GM23248 (cell line): ENCODE measurements at regions of chr1 and their contacts with region 1.

Region 1: DNA sequence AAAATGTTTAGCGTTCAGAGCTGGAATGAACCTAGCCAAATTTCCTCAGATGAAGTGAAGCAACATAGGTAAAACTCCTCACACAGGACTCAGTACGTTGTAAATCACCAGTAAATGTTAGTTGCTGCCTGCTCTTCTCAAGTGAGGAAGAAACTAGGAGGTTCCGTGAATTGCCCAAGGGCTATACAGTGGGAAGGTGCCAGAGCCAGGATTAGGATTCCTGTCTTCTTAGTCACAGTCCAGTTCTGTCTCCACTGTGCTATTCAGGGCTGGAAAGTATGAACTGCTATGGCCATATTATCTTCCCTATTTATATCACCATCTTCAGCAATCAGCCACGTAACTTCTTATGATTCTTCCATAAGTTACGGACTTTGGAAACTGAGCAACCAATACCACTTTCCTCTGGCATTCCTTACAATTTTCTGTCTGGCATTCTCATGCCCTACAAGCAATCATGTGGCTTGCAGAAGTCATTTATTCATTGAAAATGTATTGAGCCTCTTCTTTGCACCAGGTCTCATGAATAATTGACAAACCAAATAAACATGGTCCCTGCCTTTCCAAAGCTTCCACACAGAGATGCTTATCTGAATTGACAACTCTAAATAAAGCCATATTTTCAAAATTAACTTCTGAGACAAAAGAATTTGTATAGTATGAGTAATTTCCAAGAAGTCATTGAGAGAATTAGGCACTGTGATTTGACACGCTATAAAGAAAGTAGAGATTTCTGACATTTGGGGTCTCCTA is 271.6 kb upstream of the SGIP1 start:
- DNase-seq: peak; percentile 93
- H3K4me3 ChIP-seq: peak overlapping the region; percentile 30
- H3K27ac ChIP-seq: peak overlapping the region; percentile 86
- H3K4me1 ChIP-seq: peaks cover 69% of the 10 kb centered on the region
- H3K27me3 ChIP-seq: no peaks in the 10 kb centered on the region

Region 2: DNA sequence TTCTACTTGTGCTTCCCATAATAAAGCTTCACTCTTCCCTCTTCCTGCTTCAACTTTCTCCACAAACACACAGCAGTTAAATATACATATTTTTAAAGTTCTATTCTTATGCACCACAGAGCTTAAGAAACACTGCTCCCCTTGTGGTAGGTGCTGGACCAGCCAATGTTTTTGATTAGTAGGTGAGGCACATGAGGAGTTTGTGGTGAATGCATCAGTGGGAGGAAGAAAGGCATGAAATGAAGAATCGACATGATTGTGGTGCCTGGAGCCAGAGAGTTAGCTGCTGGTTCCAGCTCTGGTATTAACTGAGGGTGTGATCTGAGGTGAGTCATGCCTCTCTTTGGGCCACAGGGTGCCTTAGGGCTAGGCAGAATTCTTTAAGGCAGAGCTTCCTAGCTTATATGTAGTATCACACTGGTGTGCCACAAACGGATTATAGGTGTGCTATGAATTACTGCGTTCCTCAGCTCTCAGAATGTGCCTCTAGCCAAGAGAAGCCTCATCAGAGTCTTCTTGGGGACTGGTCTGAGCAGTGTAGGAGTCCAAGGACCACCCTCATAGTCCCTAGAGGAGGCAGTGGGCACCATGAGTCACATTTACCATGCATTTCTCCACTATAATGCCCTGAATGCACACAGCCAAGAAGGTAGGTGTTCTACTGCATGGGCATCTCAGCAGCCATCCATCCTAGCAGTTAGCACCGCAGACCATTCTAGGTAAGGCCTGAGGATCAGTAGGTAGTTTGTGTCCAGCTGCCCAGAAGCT is 174.2 kb after region 1 on chr1:
- in situ Hi-C with region 1: loop called (anchors 5 kb)
- DNase-seq: peak; percentile 94
- H3K4me3 ChIP-seq: no peak overlapping the region
- H3K27ac ChIP-seq: peak overlapping the region; percentile 59
- H3K4me1 ChIP-seq: peaks cover 59% of the 10 kb centered on the region
- H3K27me3 ChIP-seq: no peaks in the 10 kb centered on the region